Psoas muscle (tissue), 8 donors: ENCODE measurements at regions of chr13 and their contacts with region 1.

Region 1: GRCh38 chr13:43804461-43805070 is 17.8 kb upstream of the ENOX1 start:
- DNase-seq: no peak
- ATAC-seq: peak in 3 of 4 donors; percentile 56 to 85 (median 62)
- H3K4me3 ChIP-seq: no peak overlapping the region
- H3K27ac ChIP-seq: no peak overlapping the region
- H3K4me1 ChIP-seq: no peaks in the 10 kb centered on the region
- H3K27me3 ChIP-seq: no peaks in the 10 kb centered on the region
- CTCF ChIP-seq: peak; percentile 69

Region 2: GRCh38 chr13:42594970-42595571 is 1209.5 kb before region 1 on chr13:
- intact Hi-C with region 1: loop called in 1 of 2 experiments (anchors 10 kb)
- DNase-seq: no peak
- ATAC-seq: peak; percentile 39 to 83 (median 54)
- H3K4me3 ChIP-seq: no peak overlapping the region
- H3K27ac ChIP-seq: no peak overlapping the region
- H3K4me1 ChIP-seq: no peaks in the 10 kb centered on the region
- H3K27me3 ChIP-seq: peaks cover 0 to 2% (median 0%) of the 10 kb centered on the region in 3 donors
- CTCF ChIP-seq: peak; percentile 82

Region 3: DNA sequence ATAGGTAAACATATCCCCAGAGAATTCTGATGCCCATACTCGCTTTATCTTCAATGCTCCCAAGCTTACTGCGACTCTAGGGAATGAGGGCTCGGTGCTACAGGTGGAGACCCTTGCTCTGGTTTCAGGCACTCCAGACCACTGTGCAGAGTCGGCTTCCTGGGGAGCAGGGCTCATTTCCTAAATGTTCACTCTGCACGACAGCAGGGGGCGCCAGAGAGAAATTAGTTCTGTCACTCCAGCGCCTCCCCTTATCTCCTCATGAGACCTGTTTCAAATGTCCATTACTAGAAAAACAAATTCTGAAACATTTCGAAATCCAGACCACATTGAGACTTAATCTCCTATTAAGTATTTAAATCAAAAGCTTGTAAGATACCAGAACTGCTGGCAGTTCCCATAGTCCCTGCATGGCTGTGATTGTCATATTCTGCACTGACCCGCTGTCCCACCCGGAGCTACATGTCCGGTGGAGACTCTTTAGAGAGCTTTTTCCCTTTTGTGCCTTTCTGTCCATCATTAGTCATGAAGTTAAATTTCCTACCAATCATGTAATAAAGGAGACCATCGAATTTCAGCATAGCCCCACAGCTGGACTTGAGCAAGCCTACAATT is 834.9 kb before region 1 on chr13:
- intact Hi-C with region 1: loop called (anchors 5 kb)
- DNase-seq: peak; percentile 81 to 88
- ATAC-seq: peak; percentile 68 to 98 (median 86)
- H3K4me3 ChIP-seq: no peak overlapping the region
- H3K27ac ChIP-seq: no peak overlapping the region
- H3K4me1 ChIP-seq: no peaks in the 10 kb centered on the region
- H3K27me3 ChIP-seq: no peaks in the 10 kb centered on the region
- CTCF ChIP-seq: peak; percentile 73

Region 4: GRCh38 chr13:43085545-43085944 is 719.0 kb before region 1 on chr13:
- intact Hi-C with region 1: loop called (anchors 5 to 10 kb)
- DNase-seq: no peak
- ATAC-seq: no peak
- H3K4me3 ChIP-seq: no peak overlapping the region
- H3K27ac ChIP-seq: no peak overlapping the region
- H3K4me1 ChIP-seq: peaks cover 3% of the 10 kb centered on the region
- H3K27me3 ChIP-seq: no peaks in the 10 kb centered on the region
- CTCF ChIP-seq: peak; percentile 73

Region 5: GRCh38 chr13:43196086-43196621 is 608.4 kb before region 1 on chr13:
- intact Hi-C with region 1: loop called in 1 of 2 experiments (anchors 5 kb)
- DNase-seq: peak; percentile 23 to 65
- ATAC-seq: peak; percentile 65 to 87 (median 74)
- H3K4me3 ChIP-seq: no peak overlapping the region
- H3K27ac ChIP-seq: no peak overlapping the region
- H3K4me1 ChIP-seq: peaks cover 12% of the 10 kb centered on the region
- H3K27me3 ChIP-seq: no peaks in the 10 kb centered on the region
- CTCF ChIP-seq: no peak

Region 6: DNA sequence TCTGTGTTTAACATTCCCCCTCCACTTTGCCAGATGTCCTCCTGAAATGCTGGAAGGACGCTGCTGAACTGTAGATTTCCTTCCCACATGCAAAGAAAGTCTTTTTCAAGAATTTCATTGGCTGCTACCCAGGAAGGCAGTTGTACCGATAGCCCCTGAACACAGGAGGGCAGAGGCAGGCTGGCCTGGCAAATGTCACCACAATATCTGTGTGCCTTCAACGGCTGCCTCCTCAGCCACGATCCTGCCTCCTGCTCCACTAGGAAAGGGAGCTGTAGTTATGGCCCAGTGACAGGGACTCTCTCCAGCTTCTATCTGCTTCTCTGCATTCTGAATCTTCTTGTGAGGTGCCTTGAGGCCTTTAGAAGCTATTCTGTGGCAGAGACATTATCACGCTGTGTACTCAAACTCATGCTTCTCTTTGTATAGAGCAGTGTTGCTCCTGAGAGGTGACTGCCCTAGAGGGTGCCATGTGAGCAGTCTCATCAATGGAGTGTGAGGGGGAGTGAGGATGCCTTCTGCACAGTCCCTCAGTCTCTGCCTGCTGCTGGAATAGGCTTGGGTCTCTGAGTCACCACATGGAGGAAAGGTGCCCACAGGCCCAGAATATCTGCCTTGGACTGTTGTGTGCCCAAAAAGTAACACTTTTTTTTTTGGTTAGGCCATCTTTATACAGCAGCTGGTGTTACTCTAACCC is 501.4 kb before region 1 on chr13:
- intact Hi-C with region 1: loop called (anchors 5 kb)
- DNase-seq: peak; percentile 41 to 82
- ATAC-seq: peak; percentile 86 to 95 (median 91)
- H3K4me3 ChIP-seq: no peak overlapping the region
- H3K27ac ChIP-seq: peak overlapping the region; percentile 30
- H3K4me1 ChIP-seq: peaks cover 24% of the 10 kb centered on the region
- H3K27me3 ChIP-seq: no peaks in the 10 kb centered on the region
- CTCF ChIP-seq: peak; percentile 69

Region 7: GRCh38 chr13:43924549-43925245 is 120.1 kb after region 1 on chr13:
- intact Hi-C with region 1: no loop called
- DNase-seq: no peak
- ATAC-seq: no peak
- H3K4me3 ChIP-seq: no peak overlapping the region
- H3K27ac ChIP-seq: no peak overlapping the region
- H3K4me1 ChIP-seq: no peaks in the 10 kb centered on the region
- H3K27me3 ChIP-seq: no peaks in the 10 kb centered on the region
- CTCF ChIP-seq: no peak

Region 8: DNA sequence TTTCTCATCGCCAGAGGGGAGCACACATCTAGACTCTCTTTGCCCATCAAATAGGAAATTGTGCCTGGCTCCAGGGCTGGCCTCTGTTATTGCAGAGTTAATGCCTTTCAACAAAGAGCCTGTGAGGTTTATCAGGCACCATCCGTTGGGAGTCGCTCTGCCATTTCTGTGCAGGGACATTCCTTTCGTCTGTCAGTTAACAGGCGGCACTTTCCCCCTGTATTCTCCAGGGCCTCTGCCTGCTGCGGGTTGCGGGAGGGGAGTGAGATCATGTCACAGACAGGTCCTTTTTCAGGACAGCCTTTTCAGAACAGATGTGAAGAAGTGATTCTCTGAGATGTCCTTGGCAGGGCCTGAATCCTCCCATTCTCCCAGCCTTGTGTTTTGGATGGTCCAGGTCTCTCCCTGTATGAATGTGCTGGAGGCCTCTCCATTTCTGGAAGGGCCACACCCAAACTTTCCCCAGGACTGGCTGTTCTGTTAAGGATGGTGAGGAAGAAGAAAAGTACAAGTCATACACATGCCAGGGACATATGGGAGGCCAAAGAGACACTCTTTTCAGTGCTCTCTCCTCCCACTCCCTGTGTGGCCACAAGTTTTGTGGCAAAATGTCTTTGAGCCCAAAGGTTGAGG is 584.0 kb after region 1 on chr13:
- intact Hi-C with region 1: no loop called
- DNase-seq: no peak
- ATAC-seq: no peak
- H3K4me3 ChIP-seq: no peak overlapping the region
- H3K27ac ChIP-seq: no peak overlapping the region
- H3K4me1 ChIP-seq: no peaks in the 10 kb centered on the region
- H3K27me3 ChIP-seq: no peaks in the 10 kb centered on the region
- CTCF ChIP-seq: no peak